ENCODE measurements at regions of chr3 and their contacts with region 1.

Region 1: GRCh38 chr3:73100741-73101559 is 39.5 kb downstream of the EBLN2 start:
- DNase-seq: peak; percentile 74 to 90
- ATAC-seq: peak; percentile 90 to 96
- H3K4me3 ChIP-seq: no peak overlapping the region
- H3K27ac ChIP-seq: no peak overlapping the region
- H3K4me1 ChIP-seq: no peaks in the 10 kb centered on the region
- CTCF ChIP-seq: peak; percentile 88
- EP300 ChIP-seq: no peak
- POLR2A ChIP-seq: no peak
- RAD21 ChIP-seq: peak; percentile 83 to 85

Region 2: DNA sequence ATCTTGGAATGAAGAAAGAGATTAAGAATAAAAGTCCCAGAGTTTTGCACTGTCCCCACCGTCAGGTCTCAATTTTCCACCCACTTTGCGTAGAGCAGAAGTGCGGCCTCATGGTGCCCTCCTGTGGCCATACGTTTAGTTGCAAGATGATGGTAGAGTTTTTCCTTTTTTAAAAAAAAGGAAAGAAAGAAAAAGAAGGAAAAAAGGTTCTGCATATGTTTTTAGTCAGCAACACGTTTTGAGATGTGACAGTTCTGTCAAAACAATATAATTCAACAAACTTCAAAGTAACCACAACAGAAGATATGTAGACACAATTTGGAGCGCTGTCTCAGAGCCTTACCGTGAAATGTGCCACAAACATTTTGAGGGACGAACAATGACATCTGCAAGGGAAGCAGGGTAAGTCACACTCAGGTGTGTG is 14.9 kb before region 1 on chr3:
- CTCF ChIA-PET with region 1: interaction called, 13 read pairs
- POLR2A ChIA-PET with region 1: no interaction called
- DNase-seq: peak; percentile 28 to 42
- ATAC-seq: peak; percentile 71 to 85; a peak in 5 of 6 replicates
- H3K4me3 ChIP-seq: no peak overlapping the region
- H3K27ac ChIP-seq: no peak overlapping the region
- H3K4me1 ChIP-seq: no peaks in the 10 kb centered on the region
- CTCF ChIP-seq: peak; percentile 94
- EP300 ChIP-seq: no peak
- POLR2A ChIP-seq: no peak
- RAD21 ChIP-seq: peak; percentile 94 to 95

Region 3: GRCh38 chr3:73114711-73115110 is 13.8 kb after region 1 on chr3:
- CTCF ChIA-PET with region 1: interaction called, 13 read pairs
- POLR2A ChIA-PET with region 1: interaction called, 4 read pairs
- DNase-seq: no peak
- ATAC-seq: no peak
- H3K4me3 ChIP-seq: no peak overlapping the region
- H3K27ac ChIP-seq: no peak overlapping the region
- H3K4me1 ChIP-seq: no peaks in the 10 kb centered on the region
- CTCF ChIP-seq: no peak
- EP300 ChIP-seq: no peak
- POLR2A ChIP-seq: no peak
- RAD21 ChIP-seq: no peak

Region 4: DNA sequence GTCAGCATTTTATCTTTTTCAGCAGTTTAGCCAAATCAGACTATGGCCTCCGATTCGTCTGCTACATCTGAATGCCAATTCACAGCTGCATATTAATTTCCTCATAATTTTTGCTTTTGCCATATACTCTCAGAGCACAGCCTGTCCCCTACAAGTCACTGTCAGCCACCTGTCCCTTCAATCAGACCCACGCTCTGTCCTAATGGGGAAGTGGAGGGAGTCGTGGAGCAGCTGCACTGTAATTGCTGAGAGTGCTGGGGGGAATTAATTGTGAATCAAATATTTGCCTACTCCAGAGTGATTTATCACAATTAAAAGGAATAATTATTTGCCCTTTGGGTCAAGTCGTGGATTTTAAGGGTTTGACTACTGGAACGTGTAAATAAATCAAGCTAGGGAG is 36.0 kb after region 1 on chr3:
- CTCF ChIA-PET with region 1: no interaction called
- POLR2A ChIA-PET with region 1: no interaction called
- DNase-seq: no peak
- ATAC-seq: no peak
- H3K4me3 ChIP-seq: no peak overlapping the region
- H3K27ac ChIP-seq: no peak overlapping the region
- H3K4me1 ChIP-seq: no peaks in the 10 kb centered on the region
- CTCF ChIP-seq: no peak
- EP300 ChIP-seq: no peak
- POLR2A ChIP-seq: no peak
- RAD21 ChIP-seq: no peak

Region 5: DNA sequence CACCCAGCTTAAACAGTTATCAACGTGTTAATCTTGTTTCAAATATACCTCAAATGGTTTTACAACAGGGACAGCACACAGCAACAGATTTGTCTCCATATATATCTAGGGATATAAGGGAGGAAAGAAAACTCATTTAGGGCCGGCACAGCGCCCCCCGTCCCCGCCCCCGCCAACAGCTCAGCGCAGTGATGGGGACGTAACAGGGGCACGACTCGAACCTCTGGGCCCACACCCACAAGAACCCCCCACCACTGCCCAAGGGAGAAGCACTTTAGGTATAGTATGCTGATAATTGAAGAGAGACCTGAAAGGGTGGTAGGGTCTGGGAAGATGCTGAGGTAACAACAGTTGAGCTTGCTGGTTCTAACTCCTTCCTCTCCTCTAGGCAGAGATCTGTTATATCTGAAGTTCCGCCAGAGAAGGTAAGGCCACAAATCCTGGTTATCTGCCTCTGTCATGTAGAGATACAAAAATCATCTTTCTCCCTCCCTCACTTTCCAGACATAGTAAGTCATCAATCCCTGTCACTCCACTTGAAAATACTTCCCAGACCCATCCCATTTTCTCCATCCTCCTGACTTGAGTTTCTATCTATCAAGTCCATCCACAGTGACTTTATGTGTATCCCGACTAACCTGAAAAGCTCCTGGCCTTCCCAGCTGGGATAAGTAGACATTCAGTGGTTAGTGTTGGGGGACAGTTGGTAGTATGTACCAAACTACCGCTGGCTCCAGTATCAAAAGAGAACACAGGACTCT is 396.9 kb after region 1 on chr3:
- CTCF ChIA-PET with region 1: interaction called, 77 read pairs
- POLR2A ChIA-PET with region 1: no interaction called
- DNase-seq: no peak
- ATAC-seq: no peak
- H3K4me3 ChIP-seq: no peak overlapping the region
- H3K27ac ChIP-seq: no peak overlapping the region
- H3K4me1 ChIP-seq: no peaks in the 10 kb centered on the region
- CTCF ChIP-seq: no peak
- EP300 ChIP-seq: no peak
- POLR2A ChIP-seq: no peak
- RAD21 ChIP-seq: no peak

Region 6: DNA sequence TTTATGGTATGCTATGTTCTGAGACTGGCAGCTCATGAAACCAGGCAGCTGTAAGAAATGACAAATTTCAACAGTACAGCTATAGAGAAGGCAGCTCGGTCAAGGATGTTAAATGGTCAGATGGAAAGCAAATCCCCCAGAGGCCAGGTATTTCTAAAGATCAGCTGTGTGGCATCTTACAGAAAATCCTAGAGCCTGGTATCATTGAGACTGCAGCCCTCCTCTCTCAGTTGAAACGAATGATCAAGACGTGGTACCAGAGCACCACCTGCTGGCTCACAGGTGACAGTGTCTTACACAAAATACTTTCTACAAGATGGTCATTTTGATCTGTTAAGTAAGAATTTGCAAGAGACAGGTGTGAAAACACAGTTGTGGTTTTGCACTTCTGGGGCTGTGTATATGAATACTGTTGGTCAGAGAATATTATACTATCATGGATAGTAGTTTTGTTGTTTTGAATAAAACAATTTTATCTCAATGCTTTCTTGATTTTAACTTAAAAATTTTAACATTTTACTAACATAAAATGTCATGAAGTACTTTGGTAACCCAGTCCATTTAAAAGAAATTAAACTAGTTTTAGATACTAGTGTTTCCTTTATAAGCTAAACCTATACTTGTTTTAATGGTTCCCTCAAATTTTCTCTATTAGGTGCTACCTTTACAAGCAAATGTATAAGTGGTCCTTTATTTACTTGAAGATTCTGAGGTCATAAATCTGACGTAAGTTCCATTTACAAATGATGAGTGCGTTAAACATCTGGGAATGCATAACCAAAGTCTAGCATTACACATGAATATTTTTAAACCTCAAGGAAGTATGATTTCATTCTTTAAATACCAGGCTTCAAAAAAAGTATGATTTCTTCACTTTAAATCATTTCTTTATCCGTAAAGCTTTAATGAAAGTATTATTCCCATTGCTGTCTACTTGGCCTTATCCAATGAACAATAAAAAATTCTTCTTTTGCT is 401.9 kb after region 1 on chr3:
- CTCF ChIA-PET with region 1: interaction called, 77 read pairs
- POLR2A ChIA-PET with region 1: no interaction called
- DNase-seq: peak; percentile 40 to 76
- ATAC-seq: peak; percentile 83 to 87
- H3K4me3 ChIP-seq: no peak overlapping the region
- H3K27ac ChIP-seq: no peak overlapping the region
- H3K4me1 ChIP-seq: no peaks in the 10 kb centered on the region
- CTCF ChIP-seq: peak; percentile 77
- EP300 ChIP-seq: no peak
- POLR2A ChIP-seq: no peak
- RAD21 ChIP-seq: peak; percentile 80 to 88

Region 7: GRCh38 chr3:73508330-73508954 is 407.5 kb after region 1 on chr3:
- CTCF ChIA-PET with region 1: interaction called, 77 read pairs
- POLR2A ChIA-PET with region 1: no interaction called
- DNase-seq: peak; percentile 30 to 60
- ATAC-seq: peak; percentile 90 to 93
- H3K4me3 ChIP-seq: no peak overlapping the region
- H3K27ac ChIP-seq: no peak overlapping the region
- H3K4me1 ChIP-seq: 0 out of 3 replicates have a peak, but pooled peaks cover 3% of the 10 kb centered on the region
- CTCF ChIP-seq: peak; percentile 58
- EP300 ChIP-seq: no peak
- POLR2A ChIP-seq: no peak
- RAD21 ChIP-seq: peak; percentile 43 to 50

Measured in A549 (cell line).